Common myeloid progenitor, CD34-positive (primary cell): ENCODE measurements at regions of chr14 and their contacts with region 1.

Region 1: DNA sequence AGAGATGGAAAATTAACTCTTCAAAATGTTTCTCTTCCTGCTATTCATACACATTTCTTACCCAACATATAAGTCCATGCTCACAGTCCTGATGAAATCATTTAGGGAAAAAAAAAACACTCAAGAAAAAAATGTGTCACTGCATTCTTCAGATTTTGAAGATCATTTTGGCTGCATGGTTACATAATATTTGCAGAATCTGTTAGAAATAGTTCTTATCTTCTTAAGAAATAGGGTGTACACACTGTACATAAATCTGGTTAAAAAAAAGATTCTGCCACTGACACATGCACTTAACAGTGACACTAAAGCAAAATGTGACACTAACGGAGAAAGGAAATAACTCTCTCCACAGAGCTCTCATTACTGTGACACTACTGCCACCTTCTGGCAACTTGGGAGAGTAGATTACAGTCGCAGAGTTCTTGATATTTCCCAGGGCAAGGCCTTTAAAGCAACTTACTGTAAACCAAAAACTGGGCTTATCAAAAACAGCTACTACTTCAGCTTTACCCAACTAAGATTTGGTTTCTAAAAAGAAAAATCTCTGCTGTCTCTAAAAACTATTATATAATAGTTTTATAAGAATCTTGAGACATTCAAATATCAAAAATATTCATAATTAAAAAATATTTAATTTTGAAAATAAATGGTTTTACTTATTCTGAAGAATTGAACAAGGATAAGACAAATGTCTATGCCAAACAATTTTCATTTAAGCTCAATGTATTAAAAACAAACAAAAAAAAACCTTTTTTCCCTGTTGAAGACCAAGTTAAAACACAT is 65.0 kb downstream of the SETD3 start:
- DNase-seq: peak; percentile 82 to 93 (median 88)
- H3K4me3 ChIP-seq: no peak overlapping the region
- H3K27ac ChIP-seq: no peak overlapping the region
- H3K4me1 ChIP-seq: no peaks in the 10 kb centered on the region
- H3K27me3 ChIP-seq: no peaks in the 10 kb centered on the region

Region 2: GRCh38 chr14:99320105-99320572 is 95.5 kb before region 1 on chr14:
- CTCF ChIA-PET with region 1: interaction called, 51 read pairs
- POLR2A ChIA-PET with region 1: no interaction called
- DNase-seq: peak; percentile 47 to 78 (median 74)
- H3K4me3 ChIP-seq: no peak overlapping the region
- H3K27ac ChIP-seq: no peak overlapping the region
- H3K4me1 ChIP-seq: peaks cover 0 to 3% (median 0%) of the 10 kb centered on the region in 4 experiments
- H3K27me3 ChIP-seq: peaks cover 0 to 4% (median 0%) of the 10 kb centered on the region in 5 experiments

Region 3: GRCh38 chr14:99393047-99393655 is 22.5 kb before region 1 on chr14:
- CTCF ChIA-PET with region 1: interaction called, 144 read pairs
- POLR2A ChIA-PET with region 1: no interaction called
- DNase-seq: peak; percentile 17 to 43 (median 39)
- H3K4me3 ChIP-seq: no peak overlapping the region
- H3K27ac ChIP-seq: no peak overlapping the region
- H3K4me1 ChIP-seq: peaks cover 0 to under 1% (median 0%) of the 10 kb centered on the region in 4 experiments
- H3K27me3 ChIP-seq: no peaks in the 10 kb centered on the region

Region 4: GRCh38 chr14:99401621-99402284 is 13.9 kb before region 1 on chr14:
- CTCF ChIA-PET with region 1: interaction called, 144 read pairs
- POLR2A ChIA-PET with region 1: interaction called, 4 read pairs
- DNase-seq: peak; percentile 17 to 75 (median 65)
- H3K4me3 ChIP-seq: peak overlapping the region in 6 of 7 experiments; percentile 12 to 55 (median 32)
- H3K27ac ChIP-seq: peak overlapping the region in 1 of 2 experiments; percentile 63
- H3K4me1 ChIP-seq: peaks cover 4 to 14% (median 13%) of the 10 kb centered on the region in 4 experiments
- H3K27me3 ChIP-seq: no peaks in the 10 kb centered on the region

Region 5: DNA sequence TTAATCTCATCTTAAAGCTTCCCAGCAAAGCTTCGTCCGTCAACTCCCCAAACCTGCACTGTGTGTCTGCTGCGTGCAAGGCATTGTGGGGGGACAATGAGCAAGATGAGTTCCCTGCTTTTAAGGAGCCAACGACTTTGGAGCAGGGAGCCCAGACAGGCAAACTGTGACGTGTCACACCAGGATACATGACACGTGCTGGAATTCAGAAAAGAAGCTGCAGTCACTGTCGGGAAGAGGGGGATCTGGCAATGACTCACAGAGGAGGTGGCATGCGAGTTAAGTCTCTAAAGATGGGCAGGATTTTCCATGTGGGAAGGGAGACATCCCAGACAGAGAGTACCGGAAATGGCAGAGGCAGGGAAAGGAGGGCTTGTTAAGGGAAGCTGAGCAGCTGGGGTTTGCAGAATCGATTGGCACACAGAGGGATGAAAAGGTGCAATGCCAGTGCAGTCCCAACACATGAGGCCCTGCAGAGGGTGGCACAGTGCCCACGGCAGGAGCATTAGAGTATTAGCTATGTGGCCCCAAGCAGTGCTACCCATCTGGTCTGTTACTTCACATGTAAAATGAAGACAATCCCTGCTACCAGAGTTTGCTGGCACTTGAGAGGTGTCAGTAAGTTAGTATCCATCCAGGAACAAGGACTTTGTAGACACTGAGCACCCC is 12.1 kb after region 1 on chr14:
- CTCF ChIA-PET with region 1: interaction called, 14 read pairs
- POLR2A ChIA-PET with region 1: no interaction called
- DNase-seq: no peak
- H3K4me3 ChIP-seq: no peak overlapping the region
- H3K27ac ChIP-seq: no peak overlapping the region
- H3K4me1 ChIP-seq: no peaks in the 10 kb centered on the region
- H3K27me3 ChIP-seq: no peaks in the 10 kb centered on the region